ENCODE measurements at regions of chr2 and their contacts with region 1.

Region 1: GRCh38 chr2:46010925-46011490 is 286.2 kb upstream of the EPAS1 start:
- DNase-seq: peak in 1 of 2 experiments; percentile 62
- H3K4me3 ChIP-seq: no peak overlapping the region
- H3K27ac ChIP-seq: no peak overlapping the region
- H3K4me1 ChIP-seq: peaks cover 18% of the 10 kb centered on the region
- H3K27me3 ChIP-seq: no peaks in the 10 kb centered on the region
- CTCF ChIP-seq: peak; percentile 95

Region 2: DNA sequence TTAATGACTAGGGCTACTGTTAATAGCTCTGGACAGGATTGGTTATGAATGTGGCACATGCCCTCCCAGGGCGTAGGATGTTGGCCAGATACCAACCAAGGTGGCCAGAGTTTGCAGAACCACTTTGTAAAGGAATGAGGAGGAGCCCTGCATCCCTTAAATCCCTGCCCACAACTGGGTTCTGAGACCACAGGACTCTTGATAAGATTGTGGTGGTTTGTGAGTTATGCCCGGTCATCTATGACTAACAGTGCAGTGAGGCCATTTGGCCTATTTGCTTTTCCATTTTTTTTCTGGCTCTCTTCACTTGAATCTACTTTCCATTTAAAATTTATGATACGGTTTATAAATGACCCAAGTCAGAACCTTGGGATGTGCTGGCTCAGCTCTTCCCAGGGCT is 65.0 kb before region 1 on chr2:
- CTCF ChIA-PET with region 1: no interaction called
- POLR2A ChIA-PET with region 1: no interaction called
- intact Hi-C with region 1: no loop called
- DNase-seq: peak; percentile 89 to 98
- H3K4me3 ChIP-seq: no peak overlapping the region
- H3K27ac ChIP-seq: peak overlapping the region; percentile 39
- H3K4me1 ChIP-seq: peaks cover 44% of the 10 kb centered on the region
- H3K27me3 ChIP-seq: no peaks in the 10 kb centered on the region
- CTCF ChIP-seq: no peak

Region 3: GRCh38 chr2:46062637-46063412 is 51.8 kb after region 1 on chr2:
- CTCF ChIA-PET with region 1: interaction called, 4 read pairs
- POLR2A ChIA-PET with region 1: no interaction called
- intact Hi-C with region 1: loop called (anchors 5 kb)
- DNase-seq: peak; percentile 65 to 76
- H3K4me3 ChIP-seq: no peak overlapping the region
- H3K27ac ChIP-seq: no peak overlapping the region
- H3K4me1 ChIP-seq: peaks cover 40% of the 10 kb centered on the region
- H3K27me3 ChIP-seq: no peaks in the 10 kb centered on the region
- CTCF ChIP-seq: peak; percentile 99

Region 4: DNA sequence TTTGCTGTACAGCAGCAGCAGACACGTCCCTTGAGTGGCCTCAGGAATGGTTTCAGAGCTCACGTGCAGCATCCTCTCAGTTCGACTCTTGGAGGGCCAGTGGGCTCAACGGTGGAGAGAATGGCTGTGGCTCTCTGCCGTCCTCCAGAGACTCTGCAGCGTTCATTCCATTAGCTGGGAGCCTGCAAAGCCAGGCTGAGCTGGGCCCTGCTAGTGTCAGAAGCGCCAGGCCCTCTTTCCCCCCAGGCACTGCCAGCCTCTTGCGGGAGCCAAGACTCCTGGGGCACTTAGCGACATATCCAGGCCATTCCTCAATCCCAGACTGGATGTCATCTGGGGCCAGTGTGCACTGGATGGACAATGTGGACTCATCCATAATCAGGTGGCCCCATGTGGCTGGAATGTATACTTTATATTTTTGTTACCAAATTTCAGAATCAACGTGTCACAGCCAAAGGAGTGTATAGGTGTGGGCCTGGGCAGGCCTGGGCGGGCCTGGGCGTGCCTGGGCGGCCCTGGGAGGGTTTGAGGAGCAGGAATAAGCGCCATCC is 161.1 kb after region 1 on chr2:
- CTCF ChIA-PET with region 1: interaction called, 3 read pairs
- POLR2A ChIA-PET with region 1: no interaction called
- intact Hi-C with region 1: loop called (anchors 2 kb)
- DNase-seq: peak; percentile 67 to 75
- H3K4me3 ChIP-seq: no peak overlapping the region
- H3K27ac ChIP-seq: peak overlapping the region; percentile 16; the same call in 1 of the 2 replicates
- H3K4me1 ChIP-seq: peaks cover 70% of the 10 kb centered on the region
- H3K27me3 ChIP-seq: no peaks in the 10 kb centered on the region
- CTCF ChIP-seq: peak; percentile 33

Region 5: GRCh38 chr2:46277431-46278190 is 266.6 kb after region 1 on chr2:
- CTCF ChIA-PET with region 1: no interaction called
- POLR2A ChIA-PET with region 1: interaction called, 11 read pairs
- intact Hi-C with region 1: no loop called
- DNase-seq: peak in 1 of 2 experiments; percentile 39
- H3K4me3 ChIP-seq: no peak overlapping the region
- H3K27ac ChIP-seq: no peak overlapping the region
- H3K4me1 ChIP-seq: peaks cover 6% of the 10 kb centered on the region; the same call in 1 of the 2 replicates
- H3K27me3 ChIP-seq: no peaks in the 10 kb centered on the region
- CTCF ChIP-seq: no peak

Region 6: DNA sequence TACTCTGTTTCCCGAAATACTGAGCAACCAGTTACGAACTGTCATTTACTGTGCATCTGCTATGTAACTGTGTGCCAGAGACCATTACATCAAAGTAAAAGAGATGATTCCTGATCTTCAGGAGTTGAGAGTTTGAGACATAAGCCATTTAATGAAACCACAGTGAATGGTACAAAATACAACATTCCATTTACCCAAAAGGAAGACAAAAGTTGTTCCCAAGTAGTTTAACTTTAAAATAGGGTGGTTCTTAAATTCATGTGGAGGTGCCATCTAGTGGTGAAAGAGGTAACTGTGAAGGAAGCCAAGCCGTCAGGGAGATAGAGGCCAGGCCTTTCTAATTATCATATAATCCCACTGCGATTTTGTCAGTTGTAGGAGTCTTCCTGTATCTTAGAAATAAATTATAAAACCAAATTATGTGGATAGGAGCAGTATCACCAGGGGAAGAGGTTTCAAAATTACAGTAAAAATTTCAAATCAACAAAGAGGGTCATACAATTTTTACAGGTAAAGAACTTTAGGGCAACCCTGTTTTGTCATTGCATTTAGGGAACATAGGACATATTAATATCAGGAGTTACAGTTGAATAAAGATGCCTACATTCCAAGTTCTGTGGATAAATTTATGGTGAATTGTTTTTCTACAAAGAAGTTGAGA is 353.9 kb after region 1 on chr2:
- CTCF ChIA-PET with region 1: interaction called, 3 read pairs
- POLR2A ChIA-PET with region 1: no interaction called
- intact Hi-C with region 1: loop called (anchors 1 kb)
- DNase-seq: peak; percentile 35 to 49
- H3K4me3 ChIP-seq: no peak overlapping the region
- H3K27ac ChIP-seq: no peak overlapping the region
- H3K4me1 ChIP-seq: 0 out of 2 replicates have a peak, but pooled peaks cover 12% of the 10 kb centered on the region
- H3K27me3 ChIP-seq: no peaks in the 10 kb centered on the region
- CTCF ChIP-seq: peak; percentile 98

Region 7: GRCh38 chr2:46887028-46887885 is 876.2 kb after region 1 on chr2:
- CTCF ChIA-PET with region 1: no interaction called
- POLR2A ChIA-PET with region 1: no interaction called
- intact Hi-C with region 1: loop called (anchors 2 kb)
- DNase-seq: peak; percentile 30 to 49
- H3K4me3 ChIP-seq: no peak overlapping the region
- H3K27ac ChIP-seq: no peak overlapping the region
- H3K4me1 ChIP-seq: peaks cover 13% of the 10 kb centered on the region
- H3K27me3 ChIP-seq: no peaks in the 10 kb centered on the region
- CTCF ChIP-seq: no peak